IMR-90 (cell line): ENCODE measurements at regions of chr9 and their contacts with region 1.

Region 1: DNA sequence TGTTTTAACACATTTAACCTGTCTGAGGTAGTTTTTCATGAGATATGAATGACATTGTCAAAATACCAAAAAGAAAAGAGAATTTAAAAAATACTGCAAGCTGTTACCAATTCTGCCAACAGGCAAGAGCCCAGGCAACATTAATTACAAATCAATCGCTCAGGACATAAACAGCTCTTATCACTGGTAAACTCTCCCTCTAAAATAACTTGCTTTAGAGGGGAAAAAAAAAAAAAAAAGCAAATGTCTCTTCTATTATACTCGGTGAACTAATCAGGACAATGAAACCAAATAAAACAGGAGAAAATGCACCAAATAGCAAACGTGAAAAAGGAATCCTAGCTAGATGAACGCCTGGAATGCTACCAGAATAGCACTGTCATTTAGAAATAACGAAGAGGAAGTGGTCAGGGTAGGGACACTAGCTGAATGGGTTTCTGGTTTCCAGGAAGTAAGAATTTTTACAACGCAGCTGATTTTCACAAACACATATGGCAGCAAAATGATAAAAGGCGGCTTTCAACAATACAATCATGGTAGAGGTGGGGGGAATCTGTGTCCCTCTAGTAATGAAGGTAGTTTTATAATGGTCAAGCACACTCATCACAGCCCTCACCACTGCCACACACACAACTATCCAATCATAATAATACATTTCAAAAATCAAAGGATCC is 94.9 kb downstream of the DENND1A start:
- DNase-seq: peak; percentile 29
- ATAC-seq: peak; percentile 46
- H3K4me3 ChIP-seq: 0 out of 2 replicates have a peak overlapping the region, but pooled peaks have one; percentile 10
- H3K27ac ChIP-seq: no peak overlapping the region
- H3K4me1 ChIP-seq: no peaks in the 10 kb centered on the region
- H3K27me3 ChIP-seq: no peaks in the 10 kb centered on the region
- CTCF ChIP-seq: no peak
- POLR2A ChIP-seq: no peak
- RAD21 ChIP-seq: no peak

Region 2: GRCh38 chr9:123861086-123861707 is 26.2 kb after region 1 on chr9:
- CTCF ChIA-PET with region 1: interaction called, 7 read pairs
- POLR2A ChIA-PET with region 1: interaction called, 6 read pairs
- dilution Hi-C with region 1: no loop called
- in situ Hi-C with region 1: no loop called
- intact Hi-C with region 1: loop called (anchors 2 kb)
- DNase-seq: no peak
- ATAC-seq: no peak
- H3K4me3 ChIP-seq: no peak overlapping the region
- H3K27ac ChIP-seq: no peak overlapping the region
- H3K4me1 ChIP-seq: no peaks in the 10 kb centered on the region
- H3K27me3 ChIP-seq: no peaks in the 10 kb centered on the region
- CTCF ChIP-seq: no peak
- POLR2A ChIP-seq: no peak
- RAD21 ChIP-seq: no peak